ENCODE measurements at regions of chr2 and their contacts with region 1.

Region 1: GRCh38 chr2:47323009-47323821 is 79.7 kb upstream of the MSH2 start:
- DNase-seq: peak; percentile 81
- H3K4me3 Mint-ChIP-seq: no peak overlapping the region
- H3K27ac Mint-ChIP-seq: no peak overlapping the region
- H3K4me1 Mint-ChIP-seq: no peaks in the 10 kb centered on the region
- H3K27me3 Mint-ChIP-seq: peaks cover 8% of the 10 kb centered on the region

Region 2: DNA sequence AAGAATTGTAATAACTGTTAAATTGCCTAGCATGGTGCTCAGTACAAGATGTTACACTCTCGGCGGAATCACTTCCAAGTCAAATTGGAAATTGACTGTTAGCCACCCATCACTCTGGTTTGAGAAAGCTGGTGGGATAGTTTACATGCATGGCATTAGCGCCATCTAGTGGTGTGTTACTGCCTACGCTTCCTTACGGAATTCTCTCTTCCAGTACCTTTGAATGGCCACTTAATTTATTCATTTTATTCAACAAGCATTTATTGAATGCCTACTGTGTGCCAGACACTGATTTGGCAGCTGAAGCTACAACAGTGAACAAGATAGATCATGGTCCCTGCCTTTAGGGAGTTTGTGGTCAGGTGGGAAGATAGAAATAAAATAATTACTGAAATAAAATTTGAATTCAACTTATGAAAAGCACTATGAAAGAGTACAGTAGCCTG is 672.6 kb before region 1 on chr2:
- CTCF ChIA-PET with region 1: interaction called, 4 read pairs
- POLR2A ChIA-PET with region 1: no interaction called
- intact Hi-C with region 1: loop called (anchors 10 kb)
- DNase-seq: peak; percentile 72
- H3K4me3 Mint-ChIP-seq: no peak overlapping the region
- H3K27ac Mint-ChIP-seq: no peak overlapping the region
- H3K4me1 Mint-ChIP-seq: no peaks in the 10 kb centered on the region
- H3K27me3 Mint-ChIP-seq: no peaks in the 10 kb centered on the region

Region 3: DNA sequence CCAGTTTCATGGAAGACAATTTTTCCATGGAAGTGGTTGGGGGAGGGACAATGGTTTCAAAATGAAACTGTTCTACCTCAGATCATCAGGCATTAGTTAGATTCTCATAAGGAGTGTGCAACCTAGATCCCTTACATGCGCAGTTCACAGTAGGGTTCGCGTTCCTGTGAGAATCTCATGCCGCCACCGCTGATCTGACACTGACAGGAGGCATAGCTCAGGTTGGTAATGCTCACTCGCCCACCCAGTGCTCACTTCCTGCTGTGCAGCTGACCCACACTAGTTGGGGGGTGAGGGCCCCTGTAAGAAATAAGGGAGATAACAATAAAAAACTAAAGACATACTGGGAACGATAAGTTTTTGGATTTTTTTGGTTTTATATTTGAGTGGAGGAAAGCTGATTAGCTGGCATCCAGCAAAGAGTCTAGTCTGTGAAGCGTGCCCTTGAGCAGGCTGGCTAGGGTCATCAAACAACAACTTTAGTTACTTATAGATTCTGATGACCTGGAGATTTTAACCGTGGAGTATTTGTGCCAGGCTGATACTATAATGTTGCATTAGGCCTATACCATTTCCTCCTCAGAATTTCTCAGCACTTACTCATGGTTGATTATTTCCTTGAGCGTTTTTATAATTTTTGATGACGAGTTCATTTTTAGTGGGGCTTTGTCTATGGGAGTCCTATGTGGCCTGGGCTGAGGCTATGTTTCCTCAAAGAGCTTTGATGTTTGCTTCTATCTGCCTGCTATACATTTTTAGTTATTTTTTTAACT is 401.4 kb before region 1 on chr2:
- CTCF ChIA-PET with region 1: interaction called, 22 read pairs
- POLR2A ChIA-PET with region 1: no interaction called
- intact Hi-C with region 1: loop called (anchors 2 kb)
- DNase-seq: no peak
- H3K4me3 Mint-ChIP-seq: no peak overlapping the region
- H3K27ac Mint-ChIP-seq: no peak overlapping the region
- H3K4me1 Mint-ChIP-seq: peaks cover 41% of the 10 kb centered on the region
- H3K27me3 Mint-ChIP-seq: no peaks in the 10 kb centered on the region

Region 4: DNA sequence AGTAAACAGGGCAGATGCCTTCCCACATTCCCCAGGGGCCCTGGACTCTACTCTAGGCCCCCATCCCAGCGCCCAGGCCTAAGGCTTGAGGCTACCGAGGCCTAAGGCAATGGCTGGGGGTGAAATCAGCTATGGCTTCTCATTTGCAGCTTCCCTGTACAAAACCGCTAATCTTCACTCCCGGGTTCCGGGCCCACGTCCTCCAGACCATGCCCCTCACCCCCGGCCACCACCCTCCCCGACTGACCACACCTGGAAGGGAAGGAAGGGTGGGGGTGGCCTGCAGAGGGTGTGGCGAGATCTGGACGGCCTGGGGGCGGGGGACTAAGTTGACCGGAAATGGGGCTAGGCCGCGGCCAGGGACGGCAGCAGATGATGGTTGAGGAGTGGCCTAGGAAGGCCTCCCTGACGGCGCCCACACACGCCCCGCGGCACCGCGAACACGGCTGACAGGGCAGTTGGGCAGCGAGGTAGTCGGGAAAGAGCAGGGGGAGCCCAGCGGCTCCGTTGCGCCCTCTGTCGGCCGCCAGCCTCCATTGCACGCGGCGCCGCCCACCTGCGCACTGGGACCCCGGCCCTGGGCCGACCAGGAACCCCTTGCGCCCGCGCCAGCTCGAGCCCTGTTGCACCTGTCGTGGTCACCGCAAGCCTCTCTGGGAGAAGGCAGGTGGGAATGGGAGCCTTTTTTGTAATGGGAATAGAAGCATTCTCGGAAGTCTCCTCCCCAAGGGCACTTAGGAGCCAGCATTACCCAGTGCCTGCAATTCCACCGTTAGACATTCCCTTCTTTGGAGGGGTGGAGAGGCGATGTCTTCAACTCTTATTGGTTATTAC is 51.0 kb before region 1 on chr2:
- CTCF ChIA-PET with region 1: interaction called, 10 read pairs
- POLR2A ChIA-PET with region 1: no interaction called
- intact Hi-C with region 1: loop called (anchors 2 kb)
- DNase-seq: peak; percentile 72
- H3K4me3 Mint-ChIP-seq: peak overlapping the region; percentile 63
- H3K27ac Mint-ChIP-seq: no peak overlapping the region
- H3K4me1 Mint-ChIP-seq: no peaks in the 10 kb centered on the region
- H3K27me3 Mint-ChIP-seq: no peaks in the 10 kb centered on the region

Region 5: GRCh38 chr2:47336259-47337238 is 13.3 kb after region 1 on chr2:
- CTCF ChIA-PET with region 1: interaction called, 26 read pairs
- POLR2A ChIA-PET with region 1: no interaction called
- intact Hi-C with region 1: no loop called
- DNase-seq: no peak
- H3K4me3 Mint-ChIP-seq: no peak overlapping the region
- H3K27ac Mint-ChIP-seq: no peak overlapping the region
- H3K4me1 Mint-ChIP-seq: no peaks in the 10 kb centered on the region
- H3K27me3 Mint-ChIP-seq: peaks cover 3% of the 10 kb centered on the region

Region 6: GRCh38 chr2:47373747-47374146 is 50.5 kb after region 1 on chr2:
- CTCF ChIA-PET with region 1: no interaction called
- POLR2A ChIA-PET with region 1: no interaction called
- intact Hi-C with region 1: no loop called
- DNase-seq: no peak
- H3K4me3 Mint-ChIP-seq: no peak overlapping the region
- H3K27ac Mint-ChIP-seq: no peak overlapping the region
- H3K4me1 Mint-ChIP-seq: no peaks in the 10 kb centered on the region
- H3K27me3 Mint-ChIP-seq: peaks cover 11% of the 10 kb centered on the region

Region 7: GRCh38 chr2:47457268-47457667 is 134.1 kb after region 1 on chr2:
- CTCF ChIA-PET with region 1: no interaction called
- POLR2A ChIA-PET with region 1: no interaction called
- intact Hi-C with region 1: no loop called
- DNase-seq: no peak
- H3K4me3 Mint-ChIP-seq: no peak overlapping the region
- H3K27ac Mint-ChIP-seq: no peak overlapping the region
- H3K4me1 Mint-ChIP-seq: no peaks in the 10 kb centered on the region
- H3K27me3 Mint-ChIP-seq: no peaks in the 10 kb centered on the region